ENCODE measurements at regions of chr2 and their contacts with region 1.

Region 1: DNA sequence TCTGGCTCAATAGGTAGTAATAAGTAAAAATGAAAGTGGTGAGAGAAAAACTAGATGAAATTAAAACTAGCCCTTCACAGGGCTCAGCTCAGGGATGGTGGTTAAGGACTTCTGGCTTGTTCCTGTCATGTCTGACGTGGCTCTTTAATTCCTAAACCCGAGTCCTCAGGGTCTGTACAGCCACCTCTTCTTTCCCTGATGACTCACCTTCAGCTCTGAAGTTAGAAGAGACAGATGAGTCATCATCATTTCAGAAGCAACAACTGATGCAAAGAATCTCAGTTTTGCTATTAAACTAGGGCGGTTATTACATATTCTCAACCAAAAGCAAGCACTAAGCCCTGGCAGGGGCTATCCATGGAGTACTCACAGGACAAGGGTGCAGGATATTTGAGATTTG is 24.0 kb upstream of the ITGB6 start:
- DNase-seq: peak; percentile 58
- H3K4me3 Mint-ChIP-seq: no peak overlapping the region
- H3K27ac Mint-ChIP-seq: peak overlapping the region; percentile 50
- H3K4me1 Mint-ChIP-seq: peaks cover 52% of the 10 kb centered on the region
- H3K27me3 Mint-ChIP-seq: peaks cover 17% of the 10 kb centered on the region

Region 2: DNA sequence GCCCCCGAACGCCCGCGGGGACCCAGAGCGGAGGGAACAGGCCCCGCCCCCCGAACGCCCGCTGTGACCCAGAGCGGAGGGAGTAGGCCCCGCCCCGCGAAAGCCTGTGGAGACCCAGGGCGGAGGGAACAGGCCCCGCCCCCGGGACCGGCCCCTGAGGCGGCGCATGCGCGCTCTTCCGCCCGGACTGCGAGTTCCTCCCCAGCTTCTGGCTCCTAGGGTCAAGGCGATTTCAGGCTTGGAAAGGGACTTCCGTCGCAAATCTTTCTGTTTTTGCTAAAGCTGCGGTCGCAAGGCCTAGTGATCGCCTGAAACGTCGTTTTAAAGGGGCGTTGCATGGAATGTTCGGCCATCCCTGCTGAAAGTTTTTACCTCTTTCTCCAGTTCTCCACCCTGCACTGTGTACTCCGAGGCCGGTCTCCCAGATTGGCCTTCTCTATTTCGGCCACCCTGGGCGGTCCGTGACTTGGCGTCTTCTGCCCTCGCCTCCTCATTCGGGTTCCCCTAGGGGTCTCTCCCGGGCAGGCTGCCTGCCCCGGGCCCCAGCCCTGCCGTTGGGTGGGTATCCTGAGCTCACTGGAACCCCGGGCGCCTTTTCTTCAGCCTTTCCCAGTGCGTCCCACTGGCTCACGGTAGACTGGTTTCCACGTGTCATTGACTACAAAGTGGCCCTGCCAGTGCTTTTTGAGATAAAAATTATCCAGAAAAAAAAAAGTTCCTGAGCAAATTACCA is 937.2 kb before region 1 on chr2:
- CTCF ChIA-PET with region 1: no interaction called
- intact Hi-C with region 1: loop called (anchors 5 kb)
- DNase-seq: peak; percentile 97
- H3K4me3 Mint-ChIP-seq: peak overlapping the region; percentile 87
- H3K27ac Mint-ChIP-seq: peak overlapping the region; percentile 75
- H3K4me1 Mint-ChIP-seq: peaks cover 26% of the 10 kb centered on the region
- H3K27me3 Mint-ChIP-seq: no peaks in the 10 kb centered on the region

Region 3: DNA sequence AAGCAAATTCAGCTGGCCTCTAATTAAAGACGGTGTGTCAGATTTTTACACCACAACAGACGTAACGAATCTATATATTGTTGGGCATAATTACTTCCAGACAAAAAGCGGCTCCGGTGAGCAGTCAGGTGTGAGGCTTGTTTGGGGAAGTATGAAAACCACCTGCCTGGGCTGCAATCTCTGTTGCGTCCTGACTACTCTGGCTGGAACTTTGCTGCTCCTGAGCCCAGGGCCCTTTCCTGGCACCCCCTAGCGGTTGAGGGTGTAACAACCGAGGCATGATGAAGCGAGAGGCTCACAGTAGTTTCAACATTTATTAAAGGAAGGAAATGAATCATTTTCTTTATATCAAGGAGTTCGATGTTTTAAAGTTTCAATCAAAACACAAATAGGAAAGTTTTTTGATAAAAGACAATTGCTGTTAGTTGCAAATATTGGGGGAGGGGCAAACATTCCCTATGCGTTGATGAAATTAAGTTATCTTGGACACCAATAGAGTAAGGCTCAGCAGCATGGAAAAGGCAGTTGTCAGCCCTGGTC is 13.4 kb before region 1 on chr2:
- CTCF ChIA-PET with region 1: interaction called, 27 read pairs
- intact Hi-C with region 1: loop called (anchors 1 kb)
- DNase-seq: peak; percentile 90
- H3K4me3 Mint-ChIP-seq: no peak overlapping the region
- H3K27ac Mint-ChIP-seq: no peak overlapping the region
- H3K4me1 Mint-ChIP-seq: peaks cover 29% of the 10 kb centered on the region
- H3K27me3 Mint-ChIP-seq: peaks cover 7% of the 10 kb centered on the region

Region 4: DNA sequence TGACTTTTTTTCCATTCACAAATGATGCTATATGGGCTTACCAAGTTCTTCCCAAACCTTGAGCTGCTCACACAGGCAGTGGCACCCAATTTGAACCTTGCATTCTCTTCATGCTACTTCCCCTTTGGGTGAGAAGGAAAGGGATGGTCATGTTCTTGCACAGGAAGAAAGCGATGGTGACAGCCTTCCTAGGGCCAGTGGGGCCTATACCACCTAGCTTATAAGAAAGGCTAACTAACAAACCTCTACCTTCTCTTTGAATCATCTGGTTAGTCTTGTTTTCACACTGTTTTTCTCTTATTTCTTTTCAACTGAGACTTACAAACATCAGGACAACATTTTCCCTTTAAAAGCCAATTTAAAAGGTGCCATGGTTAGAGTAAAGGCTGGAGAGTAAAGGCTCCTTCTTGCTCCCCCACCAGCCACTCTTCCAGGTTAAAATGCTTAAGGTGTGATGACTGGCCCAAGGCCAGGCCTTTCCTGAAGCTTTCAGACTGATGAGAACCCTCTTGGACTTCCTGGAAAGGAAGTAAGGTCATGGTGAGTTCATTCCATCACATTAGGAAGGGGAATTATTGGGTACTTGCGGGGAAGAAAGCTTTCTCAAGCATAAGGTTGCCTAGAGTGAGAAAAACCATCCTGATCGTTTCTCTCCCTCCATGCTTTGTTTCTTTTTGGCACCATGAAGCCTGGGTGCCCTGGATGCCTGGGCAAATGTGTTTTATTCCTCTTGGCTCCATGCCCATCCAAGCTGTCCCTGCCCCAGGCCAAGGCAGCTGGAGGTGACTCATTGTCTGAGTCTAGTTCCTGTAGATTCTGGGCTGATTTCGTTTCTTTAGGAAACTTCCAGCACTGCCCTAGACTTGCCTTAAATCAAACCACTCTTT is 17.4 kb after region 1 on chr2:
- CTCF ChIA-PET with region 1: no interaction called
- intact Hi-C with region 1: no loop called
- DNase-seq: no peak
- H3K4me3 Mint-ChIP-seq: no peak overlapping the region
- H3K27ac Mint-ChIP-seq: no peak overlapping the region
- H3K4me1 Mint-ChIP-seq: no peaks in the 10 kb centered on the region
- H3K27me3 Mint-ChIP-seq: no peaks in the 10 kb centered on the region

Region 5: DNA sequence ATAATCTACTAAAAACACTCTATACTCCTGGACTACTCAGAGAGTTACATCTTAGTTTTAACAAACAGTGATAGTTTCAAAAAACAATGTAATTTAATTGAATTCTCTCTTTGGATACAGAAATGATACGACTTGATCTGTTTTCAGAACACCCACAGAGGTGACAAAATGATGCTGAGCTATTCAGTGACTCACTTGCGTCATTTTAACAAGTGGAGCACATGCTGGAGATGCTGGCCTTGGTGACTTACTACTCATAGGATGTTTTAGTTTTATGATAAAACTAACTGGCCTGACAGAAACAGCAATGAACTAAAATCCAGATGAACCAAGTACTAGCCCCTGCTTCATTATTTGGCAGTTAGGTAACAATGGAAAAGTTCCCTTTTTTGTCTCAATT is 77.4 kb after region 1 on chr2:
- CTCF ChIA-PET with region 1: interaction called, 3 read pairs
- intact Hi-C with region 1: loop called (anchors 1 kb)
- DNase-seq: peak; percentile 73
- H3K4me3 Mint-ChIP-seq: no peak overlapping the region
- H3K27ac Mint-ChIP-seq: peak overlapping the region; percentile 76
- H3K4me1 Mint-ChIP-seq: peaks cover 63% of the 10 kb centered on the region
- H3K27me3 Mint-ChIP-seq: no peaks in the 10 kb centered on the region

Region 6: DNA sequence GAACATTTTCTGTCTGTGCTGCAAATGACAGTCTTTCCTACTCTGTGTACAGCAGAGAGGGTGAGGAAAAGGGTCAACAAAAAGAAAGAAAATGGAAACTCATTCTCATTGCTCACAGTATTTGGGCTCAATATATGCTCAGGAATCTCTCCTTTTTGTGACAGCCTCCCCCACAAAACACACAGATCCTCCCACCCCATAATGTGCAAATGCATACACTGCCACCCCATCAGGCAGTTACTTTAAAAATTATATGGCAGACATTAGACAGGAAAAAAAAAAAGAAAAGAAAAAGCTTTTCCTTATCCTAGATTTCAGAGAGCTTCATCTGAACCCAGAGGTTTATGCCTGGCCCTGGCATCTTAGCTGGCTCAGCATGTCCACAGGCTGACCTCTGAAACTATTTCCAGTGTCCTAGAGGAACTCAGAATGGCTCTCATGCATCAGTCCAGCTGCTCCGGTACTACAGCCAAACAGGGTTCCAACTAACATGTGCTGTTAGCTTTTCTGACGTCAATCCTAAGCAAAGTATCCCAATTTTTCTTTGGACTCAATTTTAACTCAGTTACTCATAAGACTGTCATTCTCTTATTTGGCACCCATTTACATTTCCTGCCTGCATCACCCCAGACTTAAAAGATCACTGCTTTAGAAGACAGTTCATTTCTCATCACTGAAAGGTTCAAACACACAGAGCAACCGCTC is 163.7 kb after region 1 on chr2:
- CTCF ChIA-PET with region 1: no interaction called
- intact Hi-C with region 1: loop called (anchors 1 kb)
- DNase-seq: no peak
- H3K4me3 Mint-ChIP-seq: peak overlapping the region; percentile 29
- H3K27ac Mint-ChIP-seq: peak overlapping the region; percentile 56
- H3K4me1 Mint-ChIP-seq: peaks cover 77% of the 10 kb centered on the region
- H3K27me3 Mint-ChIP-seq: no peaks in the 10 kb centered on the region

Region 7: DNA sequence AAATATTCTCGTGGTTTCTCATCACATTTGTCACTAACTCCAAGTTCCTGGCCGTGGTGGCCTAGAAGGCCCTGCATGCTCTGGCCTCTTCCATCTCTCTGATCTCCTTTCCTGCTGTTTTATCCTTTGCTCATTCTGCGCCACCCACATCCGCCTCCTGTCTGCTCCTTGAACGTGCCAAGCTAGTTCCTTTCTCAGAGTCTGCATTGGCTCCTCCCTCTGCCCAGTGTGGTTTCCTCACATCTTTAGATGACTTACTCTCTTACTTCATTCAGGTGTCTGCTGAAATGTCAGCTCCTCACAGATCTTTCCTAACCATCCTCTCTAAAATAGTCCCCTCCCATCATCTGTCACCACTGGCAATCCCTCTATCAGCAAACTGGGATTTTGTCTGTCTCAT is 428.2 kb after region 1 on chr2:
- CTCF ChIA-PET with region 1: interaction called, 3 read pairs
- intact Hi-C with region 1: loop called (anchors 2 kb)
- DNase-seq: peak; percentile 87
- H3K4me3 Mint-ChIP-seq: no peak overlapping the region
- H3K27ac Mint-ChIP-seq: peak overlapping the region; percentile 17
- H3K4me1 Mint-ChIP-seq: peaks cover 30% of the 10 kb centered on the region
- H3K27me3 Mint-ChIP-seq: no peaks in the 10 kb centered on the region